ENCODE measurements at regions of chrX and their contacts with region 1.

Region 1: DNA sequence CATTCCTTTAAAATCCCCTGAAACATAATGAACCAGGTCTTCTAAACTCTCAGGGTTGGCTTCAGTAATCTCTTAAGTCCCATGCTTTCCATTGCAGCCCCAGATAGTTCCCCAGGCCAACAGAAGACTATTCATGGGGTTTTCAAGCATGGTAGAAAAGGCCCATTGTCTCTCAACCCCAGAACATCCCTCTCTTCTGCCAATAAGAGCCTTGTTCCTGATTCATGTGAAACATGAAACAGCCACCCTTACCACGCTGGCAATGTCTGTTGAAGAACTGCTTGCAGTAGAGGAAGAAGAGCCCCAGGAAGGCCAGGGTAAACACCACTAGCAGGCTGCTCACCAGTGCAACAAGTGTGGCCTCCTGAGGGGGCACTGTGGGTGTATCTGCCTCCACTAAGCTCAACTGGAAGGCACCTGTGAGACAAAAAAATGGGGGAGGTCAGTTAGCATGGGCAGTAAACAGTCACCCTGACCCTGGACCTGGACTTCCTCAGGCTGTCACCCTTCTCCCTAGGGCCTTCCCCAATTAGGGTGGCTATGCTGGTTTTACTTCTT is 36.4 kb downstream of the EDA2R start:
- DNase-seq: no peak
- H3K4me3 ChIP-seq: no peak overlapping the region
- H3K27ac ChIP-seq: no peak overlapping the region
- H3K4me1 ChIP-seq: no peaks in the 10 kb centered on the region
- H3K27me3 ChIP-seq: no peaks in the 10 kb centered on the region
- CTCF ChIP-seq: no peak
- POLR2A ChIP-seq: no peak

Region 2: DNA sequence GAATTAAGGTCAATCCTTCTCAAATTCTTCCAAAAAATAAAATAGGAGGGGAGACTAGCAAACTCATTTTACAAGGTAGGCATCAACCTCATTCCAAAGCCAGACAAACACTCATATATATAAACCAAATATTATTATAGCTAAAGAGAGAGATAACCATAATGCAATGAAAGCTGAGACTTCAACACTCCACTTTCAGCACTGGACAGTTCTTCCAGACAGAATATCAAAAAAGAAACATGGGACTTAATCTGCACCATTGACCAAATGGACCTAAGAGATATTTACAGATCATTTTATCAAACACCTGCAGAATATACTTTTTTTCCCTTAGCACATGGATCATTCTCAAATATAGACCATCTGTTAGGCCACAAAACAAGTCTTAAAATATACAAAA is 52.0 kb after region 1 on chrX:
- intact Hi-C with region 1: loop called (anchors 10 kb)
- DNase-seq: no peak
- H3K4me3 ChIP-seq: no peak overlapping the region
- H3K27ac ChIP-seq: no peak overlapping the region
- H3K4me1 ChIP-seq: no peaks in the 10 kb centered on the region
- H3K27me3 ChIP-seq: no peaks in the 10 kb centered on the region
- CTCF ChIP-seq: no peak
- POLR2A ChIP-seq: no peak

Measured in thyroid gland (tissue), 4 donors.